ENCODE measurements at regions of chr9 and their contacts with region 1.

Region 1: GRCh38 chr9:75001719-75002422 is 26.2 kb downstream of the CARNMT1 start:
- DNase-seq: peak; percentile 82
- H3K4me3 ChIP-seq: no peak overlapping the region
- H3K27ac ChIP-seq: peak overlapping the region; percentile 18
- H3K4me1 ChIP-seq: peaks cover 2% of the 10 kb centered on the region
- H3K27me3 ChIP-seq: no peaks in the 10 kb centered on the region
- CTCF ChIP-seq: peak; percentile 53 to 56
- POLR2A ChIP-seq: no peak

Region 2: GRCh38 chr9:75064307-75065025 is 62.6 kb after region 1 on chr9:
- CTCF ChIA-PET with region 1: no interaction called
- POLR2A ChIA-PET with region 1: no interaction called
- dilution Hi-C with region 1: no loop called
- intact Hi-C with region 1: loop called (anchors 5 kb)
- DNase-seq: no peak
- H3K4me3 ChIP-seq: no peak overlapping the region
- H3K27ac ChIP-seq: no peak overlapping the region
- H3K4me1 ChIP-seq: no peaks in the 10 kb centered on the region
- H3K27me3 ChIP-seq: no peaks in the 10 kb centered on the region
- CTCF ChIP-seq: no peak
- POLR2A ChIP-seq: no peak

Region 3: DNA sequence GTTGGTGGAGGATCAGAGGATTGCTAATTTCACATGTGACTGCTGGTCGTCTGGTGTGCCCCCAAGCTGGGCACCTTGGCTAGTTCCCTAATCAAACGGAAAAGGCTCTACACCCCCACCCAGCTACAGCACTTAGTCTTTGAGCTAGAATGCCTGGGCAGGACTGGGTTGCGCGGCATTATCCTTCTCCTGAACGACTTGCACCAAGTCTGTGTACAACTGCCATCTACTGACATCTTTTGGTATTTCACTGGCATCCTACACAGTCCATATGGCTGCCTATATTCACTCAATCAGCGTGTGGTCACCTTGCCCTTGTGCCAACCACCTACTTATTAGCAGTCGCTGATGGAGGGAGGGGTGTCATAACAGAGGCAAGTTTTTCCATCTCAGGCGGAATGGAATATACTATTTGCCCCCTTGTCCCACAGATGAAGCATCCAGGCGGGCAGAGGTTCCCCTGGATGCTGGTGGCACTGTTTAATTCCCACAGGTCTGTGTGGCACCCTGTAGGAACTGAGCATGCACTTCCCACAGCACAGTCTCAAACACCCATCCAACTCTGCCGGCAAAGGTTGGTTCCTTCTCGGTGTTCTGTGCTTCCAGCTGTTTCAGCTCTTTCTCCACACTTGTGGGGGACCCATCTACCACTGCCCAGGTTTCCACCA is 236.6 kb after region 1 on chr9:
- CTCF ChIA-PET with region 1: no interaction called
- POLR2A ChIA-PET with region 1: no interaction called
- dilution Hi-C with region 1: no loop called
- intact Hi-C with region 1: no loop called
- DNase-seq: peak; percentile 71
- H3K4me3 ChIP-seq: no peak overlapping the region
- H3K27ac ChIP-seq: no peak overlapping the region
- H3K4me1 ChIP-seq: no peaks in the 10 kb centered on the region
- H3K27me3 ChIP-seq: peaks cover 0 to 3% of the 10 kb centered on the region in 2 experiments
- CTCF ChIP-seq: peak; percentile 54 to 57
- POLR2A ChIP-seq: no peak

Region 4: GRCh38 chr9:75333624-75334023 is 331.8 kb after region 1 on chr9:
- CTCF ChIA-PET with region 1: no interaction called
- POLR2A ChIA-PET with region 1: no interaction called
- dilution Hi-C with region 1: no loop called
- intact Hi-C with region 1: no loop called
- DNase-seq: no peak
- H3K4me3 ChIP-seq: no peak overlapping the region
- H3K27ac ChIP-seq: no peak overlapping the region
- H3K4me1 ChIP-seq: no peaks in the 10 kb centered on the region
- H3K27me3 ChIP-seq: no peaks in the 10 kb centered on the region
- CTCF ChIP-seq: no peak
- POLR2A ChIP-seq: no peak

Measured in endothelial cell of umbilical vein (primary cell).